CD4-positive, alpha-beta T cell (primary cell): ENCODE measurements at regions of chr22 and their contacts with region 1.

Region 1: GRCh38 chr22:21938071-21938822 is 14.4 kb downstream of the PPM1F start:
- DNase-seq: peak; percentile 79 to 95 (median 88)
- ATAC-seq: peak; percentile 97
- H3K4me3 ChIP-seq: peak overlapping the region; percentile 67
- H3K4me3 Mint-ChIP-seq: peak overlapping the region; percentile 78
- H3K27ac ChIP-seq: peak overlapping the region; percentile 42 to 55
- H3K27ac Mint-ChIP-seq: peak overlapping the region; percentile 79
- H3K4me1 ChIP-seq: peaks cover 55% of the 10 kb centered on the region
- H3K4me1 Mint-ChIP-seq: peaks cover 37% of the 10 kb centered on the region
- H3K27me3 ChIP-seq: no peaks in the 10 kb centered on the region
- H3K27me3 Mint-ChIP-seq: no peaks in the 10 kb centered on the region
- CTCF ChIP-seq: peak; percentile 99

Region 2: GRCh38 chr22:21712894-21713712 is 225.1 kb before region 1 on chr22:
- CTCF ChIA-PET with region 1: no interaction called
- POLR2A ChIA-PET with region 1: no interaction called
- intact Hi-C with region 1: loop called in 1 of 2 experiments (anchors 1 kb)
- DNase-seq: peak; percentile 34 to 80 (median 48)
- ATAC-seq: peak; percentile 95
- H3K4me3 ChIP-seq: no peak overlapping the region
- H3K4me3 Mint-ChIP-seq: no peak overlapping the region
- H3K27ac ChIP-seq: no peak overlapping the region
- H3K27ac Mint-ChIP-seq: no peak overlapping the region
- H3K4me1 ChIP-seq: peaks cover 6% of the 10 kb centered on the region
- H3K4me1 Mint-ChIP-seq: peaks cover 7% of the 10 kb centered on the region
- H3K27me3 ChIP-seq: no peaks in the 10 kb centered on the region
- H3K27me3 Mint-ChIP-seq: no peaks in the 10 kb centered on the region
- CTCF ChIP-seq: peak; percentile 66